Naive thymus-derived CD8-positive, alpha-beta T cell (primary cell): ENCODE measurements at regions of chr6 and their contacts with region 1.

Region 1: DNA sequence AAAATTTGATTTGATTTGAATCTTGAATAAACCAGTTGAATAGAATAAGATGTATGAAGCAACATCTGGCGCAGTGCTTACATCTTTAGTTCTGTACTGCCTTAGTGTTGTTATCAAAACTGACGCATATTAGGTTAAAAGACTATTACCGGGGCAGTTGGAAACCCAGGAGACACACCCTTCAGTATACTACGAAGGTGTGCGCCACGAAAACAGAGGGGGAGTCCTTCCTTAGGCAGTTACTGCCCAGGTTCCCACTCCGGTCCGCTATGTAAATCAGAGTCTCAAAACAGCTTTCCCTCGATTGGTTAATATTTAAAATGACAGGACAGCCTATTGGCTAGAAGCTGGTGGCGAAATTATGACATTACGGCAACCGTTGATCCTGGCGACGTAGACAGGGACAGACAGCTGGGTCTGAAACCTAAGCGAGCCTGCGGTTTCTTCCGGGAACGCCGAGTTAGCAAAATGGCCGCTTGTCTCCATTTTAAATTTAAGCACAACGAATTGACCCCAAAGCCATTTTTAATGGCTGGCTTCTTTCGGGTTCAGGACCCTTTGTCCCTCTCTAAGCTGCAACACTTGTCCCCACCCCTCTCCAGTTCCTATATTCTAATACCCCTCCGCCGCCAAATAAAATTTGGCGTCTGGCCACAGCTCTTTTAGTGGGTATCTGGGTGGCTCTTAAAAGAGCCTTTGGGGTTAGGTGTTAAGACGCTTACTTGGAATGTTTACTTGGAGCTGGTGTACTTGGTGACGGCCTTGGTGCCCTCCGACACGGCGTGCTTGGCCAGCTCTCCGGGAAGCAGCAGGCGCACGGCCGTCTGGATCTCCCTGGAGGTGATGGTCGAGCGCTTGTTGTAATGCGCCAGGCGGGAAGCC is 35.8 kb downstream of the HFE start:
- DNase-seq: peak; percentile 76 to 99 (median 94)
- ATAC-seq: peak; percentile 59 to 63
- H3K4me3 Mint-ChIP-seq: peak overlapping the region; percentile 93 to 100 (median 98)
- H3K27ac Mint-ChIP-seq: peak overlapping the region; percentile 96 to 100 (median 98)
- H3K4me1 Mint-ChIP-seq: peaks cover 24 to 43% (median 33%) of the 10 kb centered on the region in 4 donors
- H3K27me3 Mint-ChIP-seq: peaks cover 0 to 4% (median 0%) of the 10 kb centered on the region in 5 donors

Region 2: DNA sequence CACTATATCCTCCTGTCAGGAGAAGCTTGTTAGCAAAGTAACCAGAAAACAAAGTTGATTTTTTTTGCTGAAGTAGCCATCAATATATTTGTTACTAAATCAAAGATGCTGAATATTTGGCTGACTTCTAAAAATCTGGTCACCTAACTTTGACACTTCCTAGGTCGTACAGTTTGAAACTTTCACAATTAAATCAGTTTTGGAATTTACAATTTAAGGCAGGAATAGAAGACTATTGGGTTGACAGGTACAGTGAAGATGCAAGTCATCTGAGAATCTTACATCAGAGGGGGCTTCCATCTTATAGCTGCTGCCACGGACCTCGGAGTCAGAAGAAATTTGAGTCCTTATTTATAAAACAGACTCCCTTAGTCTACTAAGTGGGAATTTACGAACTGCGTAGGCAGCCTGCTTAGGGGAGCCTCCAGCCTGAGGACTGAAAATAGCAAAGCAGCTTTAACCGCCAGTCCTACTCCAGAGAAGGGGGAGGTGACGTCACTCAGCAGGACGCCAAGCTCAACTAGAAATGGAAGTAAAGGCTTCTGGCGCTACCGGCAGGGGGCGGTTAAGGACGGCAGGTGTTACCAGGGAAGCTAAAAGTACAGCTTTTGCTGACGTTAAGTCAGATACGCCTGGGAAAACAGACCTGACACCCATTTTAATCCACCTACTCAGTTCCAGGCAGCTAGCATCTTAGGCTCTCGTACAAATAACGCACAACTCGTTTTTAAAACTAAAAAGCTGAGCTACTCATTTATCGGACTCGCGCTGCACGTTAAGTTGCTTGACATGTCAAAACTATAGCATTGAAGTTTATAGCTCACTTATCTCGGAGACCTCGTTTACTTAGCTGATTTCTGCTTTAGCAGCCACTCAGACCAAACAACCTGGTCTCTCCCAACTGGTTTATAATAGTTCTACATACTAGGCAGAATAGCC is 96.9 kb before region 1 on chr6:
- POLR2A ChIA-PET with region 1: interaction called, 77 read pairs
- DNase-seq: peak; percentile 83 to 98 (median 94)
- ATAC-seq: peak; percentile 45 to 47
- H3K4me3 Mint-ChIP-seq: peak overlapping the region; percentile 84 to 99 (median 92)
- H3K27ac Mint-ChIP-seq: peak overlapping the region; percentile 96 to 100 (median 99)
- H3K4me1 Mint-ChIP-seq: peaks cover 19 to 47% (median 38%) of the 10 kb centered on the region in 4 donors
- H3K27me3 Mint-ChIP-seq: peaks cover 0 to 2% (median 0%) of the 10 kb centered on the region in 5 donors

Region 3: GRCh38 chr6:26087284-26088115 is 35.5 kb before region 1 on chr6 and contains the start of gene HFE:
- POLR2A ChIA-PET with region 1: interaction called, 22 read pairs
- DNase-seq: peak in 6 of 10 donors; percentile 14 to 43 (median 32)
- ATAC-seq: peak in 1 of 2 donors; percentile 29
- H3K4me3 Mint-ChIP-seq: peak within 1 kb of the TSS; percentile 84 to 93 (median 88)
- H3K27ac Mint-ChIP-seq: peak within 1 kb of the TSS in 9 of 10 donors; percentile 74 to 92 (median 86)
- H3K4me1 Mint-ChIP-seq: peaks cover 12 to 56% (median 29%) of the 10 kb centered on the region in 4 donors
- H3K27me3 Mint-ChIP-seq: no peaks in the 10 kb centered on the region
- polyA plus RNA-seq, gene HFE: 0.68 to 3.8 (median 1.8) TPM

Region 4: GRCh38 chr6:26183581-26184366 is 60.7 kb after region 1 on chr6:
- POLR2A ChIA-PET with region 1: interaction called, 66 read pairs
- DNase-seq: peak; percentile 22 to 82 (median 58)
- ATAC-seq: peak; percentile 92 to 94
- H3K4me3 Mint-ChIP-seq: peak overlapping the region; percentile 93 to 100 (median 98)
- H3K27ac Mint-ChIP-seq: peak overlapping the region; percentile 70 to 98 (median 95)
- H3K4me1 Mint-ChIP-seq: peaks cover 27 to 48% (median 46%) of the 10 kb centered on the region in 4 donors
- H3K27me3 Mint-ChIP-seq: no peaks in the 10 kb centered on the region

Region 5: DNA sequence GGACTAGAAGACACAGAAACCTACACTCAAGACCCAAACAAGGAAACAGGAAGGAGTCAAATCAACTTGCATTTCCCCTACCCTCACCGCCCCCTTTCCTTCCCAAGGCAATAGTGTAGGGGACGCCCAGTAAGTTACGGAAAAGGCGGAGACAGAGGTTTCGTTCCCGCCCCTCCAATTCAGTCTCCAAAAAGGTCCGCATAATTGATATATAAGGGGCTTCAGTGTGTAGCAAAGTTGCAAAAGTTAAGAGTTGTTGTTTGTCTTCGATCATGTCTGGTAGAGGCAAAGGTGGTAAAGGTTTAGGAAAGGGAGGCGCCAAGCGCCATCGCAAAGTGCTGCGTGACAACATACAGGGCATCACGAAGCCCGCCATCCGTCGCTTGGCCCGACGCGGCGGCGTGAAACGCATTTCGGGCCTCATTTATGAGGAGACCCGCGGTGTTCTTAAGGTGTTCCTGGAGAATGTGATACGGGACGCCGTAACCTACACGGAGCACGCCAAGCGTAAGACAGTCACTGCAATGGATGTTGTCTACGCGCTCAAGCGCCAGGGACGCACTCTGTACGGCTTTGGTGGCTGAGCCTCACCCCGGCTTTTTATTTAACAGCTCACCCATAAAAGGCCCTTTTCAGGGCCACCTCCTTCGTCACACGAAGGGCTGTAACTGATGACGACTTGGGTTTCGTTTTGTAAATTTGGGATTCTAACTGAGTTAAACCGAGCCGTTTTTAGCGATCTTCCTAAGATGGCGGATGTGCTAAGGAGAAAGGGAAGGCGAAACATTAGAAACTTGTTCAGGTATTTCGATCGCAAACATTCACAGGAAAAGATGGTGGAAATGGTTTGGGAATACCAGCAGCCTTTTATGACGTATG is 117.4 kb after region 1 on chr6:
- POLR2A ChIA-PET with region 1: interaction called, 78 read pairs
- DNase-seq: peak; percentile 39 to 90 (median 80)
- ATAC-seq: peak; percentile 82 to 85
- H3K4me3 Mint-ChIP-seq: peak overlapping the region; percentile 82 to 95 (median 88)
- H3K27ac Mint-ChIP-seq: peak overlapping the region; percentile 92 to 99 (median 98)
- H3K4me1 Mint-ChIP-seq: peaks cover 9 to 25% (median 22%) of the 10 kb centered on the region in 4 donors
- H3K27me3 Mint-ChIP-seq: no peaks in the 10 kb centered on the region

Region 6: GRCh38 chr6:27146706-27147505 is 1023.9 kb after region 1 on chr6:
- POLR2A ChIA-PET with region 1: interaction called, 54 read pairs
- DNase-seq: peak; percentile 37 to 94 (median 82)
- ATAC-seq: peak; percentile 85 to 88
- H3K4me3 Mint-ChIP-seq: no peak overlapping the region
- H3K27ac Mint-ChIP-seq: no peak overlapping the region
- H3K4me1 Mint-ChIP-seq: peaks cover 3 to 25% (median 12%) of the 10 kb centered on the region in 4 donors
- H3K27me3 Mint-ChIP-seq: no peaks in the 10 kb centered on the region